ENCODE measurements at regions of chr1 and their contacts with region 1.

Region 1: GRCh38 chr1:115609021-115609420 is 32.7 kb upstream of the VANGL1 start:
- DNase-seq: no peak
- H3K4me3 ChIP-seq: no peak overlapping the region
- H3K27ac ChIP-seq: no peak overlapping the region
- H3K4me1 ChIP-seq: no peaks in the 10 kb centered on the region
- H3K27me3 ChIP-seq: peaks cover 2 to 3% of the 10 kb centered on the region in 2 experiments
- CTCF ChIP-seq: no peak
- POLR2A ChIP-seq: no peak

Region 2: GRCh38 chr1:115669002-115669673 is 60.1 kb after region 1 on chr1:
- CTCF ChIA-PET with region 1: interaction called, 24 read pairs
- POLR2A ChIA-PET with region 1: no interaction called
- dilution Hi-C with region 1: no loop called
- intact Hi-C with region 1: no loop called
- DNase-seq: peak; percentile 50
- H3K4me3 ChIP-seq: no peak overlapping the region
- H3K27ac ChIP-seq: peak overlapping the region; percentile 38
- H3K4me1 ChIP-seq: peaks cover 9% of the 10 kb centered on the region
- H3K27me3 ChIP-seq: no peaks in the 10 kb centered on the region
- CTCF ChIP-seq: no peak
- POLR2A ChIP-seq: no peak

Region 3: DNA sequence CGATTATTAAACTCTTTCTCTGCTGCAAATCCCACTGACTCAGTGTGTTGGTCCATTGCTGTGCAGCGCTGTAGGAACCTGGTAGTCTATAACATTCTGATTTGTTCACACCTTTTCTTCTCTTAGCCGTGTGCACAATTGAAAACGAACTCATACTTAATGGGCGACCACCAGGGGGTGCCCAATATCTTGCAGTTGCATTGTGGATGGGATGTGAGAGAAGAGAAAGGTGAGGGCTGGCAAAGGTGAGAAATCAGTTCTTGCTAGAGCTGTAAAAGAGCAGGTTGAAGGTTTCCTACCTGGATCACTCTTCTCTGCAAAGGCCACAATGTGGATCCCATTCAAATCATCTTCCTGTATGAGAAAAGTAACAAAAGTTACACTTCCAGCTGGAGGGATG is 108.5 kb after region 1 on chr1:
- CTCF ChIA-PET with region 1: interaction called, 21 read pairs
- POLR2A ChIA-PET with region 1: no interaction called
- dilution Hi-C with region 1: no loop called
- intact Hi-C with region 1: no loop called
- DNase-seq: peak; percentile 30
- H3K4me3 ChIP-seq: no peak overlapping the region
- H3K27ac ChIP-seq: no peak overlapping the region
- H3K4me1 ChIP-seq: no peaks in the 10 kb centered on the region
- H3K27me3 ChIP-seq: peaks cover 2 to 16% of the 10 kb centered on the region in 2 experiments
- CTCF ChIP-seq: peak; percentile 41 to 56
- POLR2A ChIP-seq: no peak

Region 4: GRCh38 chr1:115771847-115772457 is 162.9 kb after region 1 on chr1:
- CTCF ChIA-PET with region 1: interaction called, 65 read pairs
- POLR2A ChIA-PET with region 1: no interaction called
- dilution Hi-C with region 1: no loop called
- intact Hi-C with region 1: loop called (anchors 1 kb)
- DNase-seq: peak; percentile 73
- H3K4me3 ChIP-seq: no peak overlapping the region
- H3K27ac ChIP-seq: no peak overlapping the region
- H3K4me1 ChIP-seq: no peaks in the 10 kb centered on the region
- H3K27me3 ChIP-seq: peaks cover 0 to 13% of the 10 kb centered on the region in 2 experiments
- CTCF ChIP-seq: peak; percentile 58 to 69
- POLR2A ChIP-seq: no peak

Region 5: DNA sequence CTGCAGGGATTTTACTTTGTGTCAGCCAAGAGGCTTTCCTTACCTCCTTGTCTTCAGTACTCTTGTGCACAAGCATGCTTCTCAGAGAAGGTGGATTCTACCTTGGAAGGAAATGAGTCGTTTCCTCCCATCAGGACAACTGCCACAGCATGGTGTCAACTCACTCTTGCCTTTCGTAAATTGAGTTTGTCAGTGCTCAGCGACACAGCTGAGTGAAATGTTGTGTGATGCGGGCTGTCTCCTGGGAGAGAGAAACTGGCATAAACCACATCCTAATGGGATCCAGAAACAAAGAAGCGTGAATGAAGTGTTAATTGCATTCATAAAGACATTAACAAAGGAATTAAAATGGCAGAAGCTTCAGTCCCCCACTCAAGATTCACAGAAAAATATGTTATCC is 315.7 kb after region 1 on chr1:
- CTCF ChIA-PET with region 1: no interaction called
- POLR2A ChIA-PET with region 1: no interaction called
- dilution Hi-C with region 1: no loop called
- intact Hi-C with region 1: no loop called
- DNase-seq: no peak
- H3K4me3 ChIP-seq: no peak overlapping the region
- H3K27ac ChIP-seq: no peak overlapping the region
- H3K4me1 ChIP-seq: peaks cover 8% of the 10 kb centered on the region
- H3K27me3 ChIP-seq: peaks cover 0 to 3% of the 10 kb centered on the region in 2 experiments
- CTCF ChIP-seq: no peak
- POLR2A ChIP-seq: no peak